CD8-positive, alpha-beta T cell (primary cell): ENCODE measurements at regions of chr14 and their contacts with region 1.

Region 1: DNA sequence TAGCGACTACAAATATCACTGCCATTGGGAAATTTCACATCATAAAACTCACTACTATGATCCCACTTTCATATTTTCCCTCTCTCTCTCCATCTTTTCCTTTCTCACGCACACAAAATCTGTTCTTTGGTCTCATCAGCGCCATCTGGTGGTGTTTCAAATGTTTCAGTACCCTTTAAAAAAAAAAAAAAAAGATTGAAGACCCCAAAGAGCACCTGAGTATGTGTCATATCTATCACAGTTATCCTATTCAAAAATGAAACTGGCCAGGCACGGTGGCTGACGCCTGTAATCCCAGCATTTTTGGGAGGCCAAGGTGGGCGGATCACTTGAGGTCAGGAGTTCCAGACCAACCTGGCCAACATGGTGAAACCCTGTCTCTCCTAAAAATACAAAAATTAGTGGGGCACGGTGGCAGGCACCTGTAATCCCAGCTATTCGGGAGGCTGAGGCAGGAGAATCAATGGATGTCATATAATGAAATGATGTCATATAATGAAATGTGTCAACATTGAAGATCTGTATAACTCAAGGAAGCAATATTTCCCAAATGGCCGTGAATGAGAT is 72.4 kb downstream of the TTC9 start:
- DNase-seq: peak in 8 of 9 experiments; percentile 29 to 82 (median 60)
- ATAC-seq: peak; percentile 36
- H3K4me3 ChIP-seq: no peak overlapping the region
- H3K4me3 Mint-ChIP-seq: no peak overlapping the region
- H3K27ac ChIP-seq: no peak overlapping the region
- H3K27ac Mint-ChIP-seq: no peak overlapping the region
- H3K4me1 ChIP-seq: peaks cover 3% of the 10 kb centered on the region
- H3K4me1 Mint-ChIP-seq: peaks cover 4% of the 10 kb centered on the region
- H3K27me3 ChIP-seq: no peaks in the 10 kb centered on the region
- H3K27me3 Mint-ChIP-seq: peaks cover 3% of the 10 kb centered on the region
- CTCF ChIP-seq: peak; percentile 95

Region 2: GRCh38 chr14:69726761-69727511 is 987.2 kb before region 1 on chr14:
- CTCF ChIA-PET with region 1: no interaction called
- POLR2A ChIA-PET with region 1: no interaction called
- intact Hi-C with region 1: no loop called
- DNase-seq: peak; percentile 68 to 93 (median 84)
- ATAC-seq: peak; percentile 85
- H3K4me3 ChIP-seq: peak overlapping the region; percentile 48 to 60
- H3K4me3 Mint-ChIP-seq: peak overlapping the region; percentile 73
- H3K27ac ChIP-seq: peak overlapping the region in 1 of 2 experiments; percentile 50
- H3K27ac Mint-ChIP-seq: peak overlapping the region; percentile 76
- H3K4me1 ChIP-seq: peaks cover 12% of the 10 kb centered on the region
- H3K4me1 Mint-ChIP-seq: peaks cover 6% of the 10 kb centered on the region
- H3K27me3 ChIP-seq: no peaks in the 10 kb centered on the region
- H3K27me3 Mint-ChIP-seq: no peaks in the 10 kb centered on the region
- CTCF ChIP-seq: peak; percentile 95

Region 3: DNA sequence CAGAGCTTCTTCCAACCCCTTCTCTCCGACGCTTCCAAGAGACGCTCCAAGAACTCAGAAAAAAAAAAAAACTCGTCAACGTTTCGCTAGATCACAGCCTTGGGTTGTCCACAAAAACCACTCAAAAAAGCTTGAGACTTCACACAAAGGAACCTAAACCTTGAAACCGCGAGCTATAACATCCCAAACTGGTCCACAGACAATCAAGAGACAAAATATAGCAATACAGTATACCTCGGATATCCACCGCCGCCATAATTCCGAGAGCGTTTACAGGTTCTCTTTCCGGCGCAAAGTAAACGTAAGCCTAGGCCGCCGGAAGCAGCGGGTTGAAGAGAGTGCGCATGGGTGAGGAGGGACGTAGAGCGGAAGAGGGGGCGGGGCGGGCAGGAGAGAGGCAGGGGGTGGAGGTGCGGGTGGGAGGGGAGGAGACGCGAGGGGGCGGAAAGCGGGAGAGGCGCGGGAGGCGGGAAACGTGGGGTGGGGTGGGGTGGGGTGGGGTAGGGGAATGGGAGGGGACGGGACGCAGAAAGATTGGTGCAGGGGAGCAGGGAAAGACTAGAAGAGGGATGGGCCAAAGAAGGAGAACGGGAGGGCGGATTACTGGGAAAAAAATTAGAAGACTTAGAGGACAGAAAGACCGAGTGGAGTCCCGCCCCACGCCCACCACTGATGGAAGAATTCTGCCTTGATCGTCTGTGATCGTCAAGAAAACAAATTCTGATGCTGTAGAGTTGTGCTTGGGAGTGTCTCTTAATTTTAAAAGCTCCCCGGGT is 113.6 kb before region 1 on chr14 and contains the start of gene MED6:
- CTCF ChIA-PET with region 1: interaction called, 6 read pairs
- POLR2A ChIA-PET with region 1: no interaction called
- intact Hi-C with region 1: loop called in 1 of 2 experiments (anchors 5 kb)
- DNase-seq: peak; percentile 83 to 96 (median 94)
- ATAC-seq: peak; percentile 100
- H3K4me3 ChIP-seq: peak within 1 kb of the TSS; percentile 90 to 99
- H3K4me3 Mint-ChIP-seq: peak within 1 kb of the TSS; percentile 99
- H3K27ac ChIP-seq: peak within 1 kb of the TSS; percentile 92 to 96
- H3K27ac Mint-ChIP-seq: peak within 1 kb of the TSS; percentile 99
- H3K4me1 ChIP-seq: peaks cover 20% of the 10 kb centered on the region
- H3K4me1 Mint-ChIP-seq: peaks cover 30% of the 10 kb centered on the region
- H3K27me3 ChIP-seq: no peaks in the 10 kb centered on the region
- H3K27me3 Mint-ChIP-seq: no peaks in the 10 kb centered on the region
- CTCF ChIP-seq: no peak
- total RNA-seq, gene MED6: 116 to 119 TPM

Region 4: GRCh38 chr14:70640938-70641547 is 73.1 kb before region 1 on chr14:
- CTCF ChIA-PET with region 1: interaction called, 19 read pairs
- POLR2A ChIA-PET with region 1: interaction called, 3 read pairs
- intact Hi-C with region 1: loop called in 1 of 2 experiments (anchors 1 kb)
- DNase-seq: peak in 7 of 9 experiments; percentile 30 to 79 (median 66)
- ATAC-seq: peak; percentile 66
- H3K4me3 ChIP-seq: peak overlapping the region; percentile 59 to 63
- H3K4me3 Mint-ChIP-seq: peak overlapping the region; percentile 99
- H3K27ac ChIP-seq: peak overlapping the region; percentile 24 to 26
- H3K27ac Mint-ChIP-seq: peak overlapping the region; percentile 97
- H3K4me1 ChIP-seq: peaks cover 33% of the 10 kb centered on the region
- H3K4me1 Mint-ChIP-seq: peaks cover 51% of the 10 kb centered on the region
- H3K27me3 ChIP-seq: no peaks in the 10 kb centered on the region
- H3K27me3 Mint-ChIP-seq: no peaks in the 10 kb centered on the region
- CTCF ChIP-seq: no peak

Region 5: DNA sequence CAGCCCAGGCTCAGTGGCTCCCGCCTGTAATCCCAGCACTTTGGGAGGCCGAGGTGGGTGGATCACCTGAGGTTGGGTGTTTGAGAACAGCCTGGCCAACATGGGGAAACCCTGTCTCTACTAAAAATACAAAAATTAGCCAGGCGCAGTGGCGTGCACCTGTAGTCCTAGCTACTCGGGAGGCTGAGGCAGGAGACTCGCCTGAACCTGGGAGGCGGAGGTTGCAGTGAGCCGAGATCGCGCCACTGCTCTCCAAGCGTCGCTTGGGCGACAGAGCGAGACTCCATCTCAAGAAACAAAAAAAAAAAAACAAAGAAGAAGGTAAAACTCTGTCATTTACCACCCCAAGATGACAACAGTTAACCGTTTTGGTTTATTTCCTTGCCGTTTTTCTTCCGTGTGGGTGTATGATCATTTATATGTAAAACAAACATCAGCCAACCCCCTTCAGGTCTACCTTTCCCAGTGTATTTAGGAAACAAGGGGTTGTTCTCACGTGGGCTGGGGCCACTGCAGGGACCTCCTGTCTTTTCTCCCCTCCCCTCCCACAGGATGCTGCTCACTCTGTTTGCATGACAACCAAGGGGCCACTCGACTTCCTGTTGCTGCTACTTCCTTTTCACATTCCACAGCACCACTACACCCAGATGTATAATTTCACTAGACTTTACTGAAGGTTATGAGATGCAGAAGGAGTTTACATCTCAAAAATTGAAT is 58.9 kb before region 1 on chr14:
- CTCF ChIA-PET with region 1: interaction called, 38 read pairs
- POLR2A ChIA-PET with region 1: interaction called, 3 read pairs
- intact Hi-C with region 1: loop called in 1 of 2 experiments (anchors 2 kb)
- DNase-seq: peak; percentile 31 to 91 (median 79)
- ATAC-seq: peak; percentile 88
- H3K4me3 ChIP-seq: peak overlapping the region; percentile 32 to 46
- H3K4me3 Mint-ChIP-seq: peak overlapping the region; percentile 86
- H3K27ac ChIP-seq: peak overlapping the region; percentile 76 to 90
- H3K27ac Mint-ChIP-seq: peak overlapping the region; percentile 99
- H3K4me1 ChIP-seq: peaks cover 91% of the 10 kb centered on the region
- H3K4me1 Mint-ChIP-seq: peaks cover 93% of the 10 kb centered on the region
- H3K27me3 ChIP-seq: no peaks in the 10 kb centered on the region
- H3K27me3 Mint-ChIP-seq: no peaks in the 10 kb centered on the region
- CTCF ChIP-seq: no peak

Region 6: GRCh38 chr14:70689726-70690125 is 24.4 kb before region 1 on chr14:
- CTCF ChIA-PET with region 1: interaction called, 14 read pairs
- POLR2A ChIA-PET with region 1: no interaction called
- intact Hi-C with region 1: no loop called
- DNase-seq: no peak
- ATAC-seq: no peak
- H3K4me3 ChIP-seq: no peak overlapping the region
- H3K4me3 Mint-ChIP-seq: no peak overlapping the region
- H3K27ac ChIP-seq: no peak overlapping the region
- H3K27ac Mint-ChIP-seq: no peak overlapping the region
- H3K4me1 ChIP-seq: no peaks in the 10 kb centered on the region
- H3K4me1 Mint-ChIP-seq: no peaks in the 10 kb centered on the region
- H3K27me3 ChIP-seq: no peaks in the 10 kb centered on the region
- H3K27me3 Mint-ChIP-seq: no peaks in the 10 kb centered on the region
- CTCF ChIP-seq: no peak

Region 7: DNA sequence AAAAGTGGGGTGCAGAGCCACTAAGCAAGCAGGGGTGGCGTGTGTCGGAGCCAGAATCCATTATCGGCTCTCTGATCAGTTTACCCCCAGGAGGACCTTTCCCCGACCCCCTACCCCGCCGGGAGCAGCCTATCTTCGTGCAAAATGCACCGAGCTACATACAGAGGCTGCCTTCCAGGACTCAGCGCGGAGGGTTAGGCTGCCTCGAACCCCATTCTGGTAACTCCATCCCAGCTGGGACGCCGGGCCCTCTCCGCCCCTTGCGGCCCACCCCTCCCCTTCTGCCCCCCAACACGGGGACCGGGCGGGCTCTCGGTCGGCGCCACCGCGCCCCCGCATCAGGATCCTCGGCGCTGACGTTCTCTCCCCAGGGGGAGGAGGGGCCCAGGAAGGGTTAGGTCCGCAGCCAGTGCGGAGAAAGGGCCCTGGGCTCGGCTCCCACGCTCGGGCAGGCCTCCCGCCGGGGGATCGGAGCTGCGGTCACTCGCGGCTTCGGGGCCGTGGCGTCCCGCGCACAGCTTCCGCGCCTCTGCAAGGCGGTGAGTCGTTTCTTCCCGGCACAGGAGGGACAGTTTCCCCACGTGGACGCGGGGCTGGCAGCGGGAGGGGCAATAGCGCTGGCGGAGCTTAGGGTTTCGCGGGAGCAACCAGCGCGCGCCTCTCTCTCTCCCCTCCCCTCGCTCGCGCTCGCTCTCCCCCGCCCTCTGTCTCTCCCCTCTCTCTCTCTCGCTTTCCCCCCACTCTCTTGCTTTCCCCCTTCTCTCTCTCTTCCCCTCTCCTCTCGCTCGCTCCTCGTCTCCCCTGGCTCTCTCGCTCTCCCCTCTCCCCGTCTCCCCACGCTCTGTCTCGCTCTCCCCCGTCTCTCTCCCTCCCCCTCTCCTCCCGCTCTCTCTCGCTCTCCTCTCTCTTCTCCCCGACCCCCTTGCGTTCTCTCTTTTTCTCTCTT is 107.7 kb after region 1 on chr14:
- CTCF ChIA-PET with region 1: interaction called, 25 read pairs
- POLR2A ChIA-PET with region 1: no interaction called
- intact Hi-C with region 1: loop called (anchors 1 to 2 kb)
- DNase-seq: peak in 8 of 9 experiments; percentile 35 to 73 (median 58)
- ATAC-seq: peak; percentile 39
- H3K4me3 ChIP-seq: peak overlapping the region; percentile 57 to 67
- H3K4me3 Mint-ChIP-seq: peak overlapping the region; percentile 76
- H3K27ac ChIP-seq: peak overlapping the region in 1 of 2 experiments; percentile 15
- H3K27ac Mint-ChIP-seq: no peak overlapping the region
- H3K4me1 ChIP-seq: peaks cover 17% of the 10 kb centered on the region
- H3K4me1 Mint-ChIP-seq: peaks cover 16% of the 10 kb centered on the region
- H3K27me3 ChIP-seq: no peaks in the 10 kb centered on the region
- H3K27me3 Mint-ChIP-seq: peaks cover 7% of the 10 kb centered on the region
- CTCF ChIP-seq: no peak